ENCODE measurements at regions of chr1 and their contacts with region 1.

Region 1: GRCh38 chr1:100530880-100531487 is 7.0 kb upstream of the GPR88 start:
- DNase-seq: no peak
- H3K4me3 ChIP-seq: no peak overlapping the region
- H3K27ac ChIP-seq: no peak overlapping the region
- H3K4me1 ChIP-seq: peaks cover 0 to 4% (median 2%) of the 10 kb centered on the region in 4 experiments; a peak in 3 of 7 replicates
- H3K27me3 ChIP-seq: peaks cover 0 to 4% (median 0%) of the 10 kb centered on the region in 4 experiments; a peak in 2 of 7 replicates
- CTCF ChIP-seq: no peak
- EP300 ChIP-seq: no peak
- POLR2A ChIP-seq: no peak
- RAD21 ChIP-seq: no peak

Region 2: GRCh38 chr1:100543640-100544039 is 12.7 kb after region 1 on chr1:
- CTCF ChIA-PET with region 1: interaction called, 12 read pairs
- POLR2A ChIA-PET with region 1: no interaction called
- DNase-seq: peak in 1 of 2 experiments; percentile 54
- H3K4me3 ChIP-seq: no peak overlapping the region
- H3K27ac ChIP-seq: no peak overlapping the region
- H3K4me1 ChIP-seq: peaks cover 0 to 11% (median 3%) of the 10 kb centered on the region in 4 experiments; a peak in 5 of 7 replicates
- H3K27me3 ChIP-seq: peaks cover 24 to 28% (median 27%) of the 10 kb centered on the region in 4 experiments
- CTCF ChIP-seq: peak; percentile 26 to 86 (median 56)
- EP300 ChIP-seq: no peak
- POLR2A ChIP-seq: no peak
- RAD21 ChIP-seq: peak; percentile 59 to 74

Region 3: DNA sequence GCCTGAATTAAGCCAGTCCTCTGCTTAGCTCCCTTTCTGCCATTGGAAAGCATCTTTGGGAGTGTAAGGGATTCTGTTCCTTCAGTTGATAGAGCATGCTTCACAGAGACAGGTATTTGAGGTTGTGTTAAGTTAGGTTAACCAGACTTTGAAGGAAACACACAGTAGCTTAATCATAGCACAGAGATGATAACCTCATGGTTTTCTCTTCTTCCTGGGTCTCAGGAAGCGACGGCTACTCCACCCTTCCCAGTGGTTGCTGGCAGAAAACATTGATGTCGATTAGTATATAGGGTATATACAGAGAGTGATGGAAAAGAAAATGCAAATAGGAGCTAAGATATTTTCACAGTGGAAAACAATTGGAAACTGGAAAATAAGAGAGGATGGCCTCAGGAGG is 747.9 kb after region 1 on chr1:
- CTCF ChIA-PET with region 1: no interaction called
- POLR2A ChIA-PET with region 1: no interaction called
- DNase-seq: no peak
- H3K4me3 ChIP-seq: no peak overlapping the region
- H3K27ac ChIP-seq: no peak overlapping the region
- H3K4me1 ChIP-seq: no peaks in the 10 kb centered on the region
- H3K27me3 ChIP-seq: no peaks in the 10 kb centered on the region
- CTCF ChIP-seq: no peak
- EP300 ChIP-seq: no peak
- POLR2A ChIP-seq: no peak
- RAD21 ChIP-seq: no peak